ENCODE measurements at regions of chr6 and their contacts with region 1.

Region 1: DNA sequence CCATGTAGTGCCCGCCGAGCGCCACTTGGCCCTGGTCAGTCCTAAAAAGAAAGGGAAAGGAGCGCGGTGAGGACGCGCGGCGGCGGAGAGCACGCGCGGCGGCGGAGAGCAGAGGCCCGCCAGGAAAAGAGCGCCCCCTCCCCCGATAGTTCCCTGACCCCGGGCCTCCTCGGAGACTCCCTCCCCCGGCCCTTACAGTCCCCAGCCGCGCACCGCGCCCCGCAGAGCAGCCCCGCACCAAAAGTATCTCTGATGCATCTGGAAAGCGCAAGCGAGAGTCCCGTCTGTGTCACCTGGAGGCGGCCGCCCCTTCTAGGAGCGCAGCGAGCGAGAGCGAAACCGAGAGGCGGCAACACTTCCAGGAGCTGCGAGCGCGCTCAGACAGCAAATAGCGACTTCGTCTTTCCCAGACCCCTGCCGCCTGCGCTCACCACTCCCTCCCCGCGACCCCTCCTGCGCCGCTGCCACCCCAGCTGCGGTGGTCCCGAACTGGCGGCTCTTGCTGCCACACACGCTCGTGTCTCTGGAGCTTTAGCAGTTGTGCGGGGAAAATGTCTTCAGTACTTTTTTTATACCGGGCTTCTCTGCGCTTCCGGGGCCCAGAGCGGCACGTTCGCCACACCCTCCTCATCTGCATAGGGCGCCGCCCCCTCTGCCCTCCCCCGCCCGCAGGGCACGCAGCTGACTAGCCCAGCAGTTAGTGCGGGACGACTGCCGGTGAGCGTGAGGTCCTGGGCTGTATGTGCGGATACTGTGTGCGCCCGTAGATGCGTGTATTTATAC is at the start of gene TENT5A:
- DNase-seq: peak; percentile 91 to 93
- ATAC-seq: peak; percentile 84 to 93 (median 88)
- H3K4me3 ChIP-seq: peak within 1 kb of the TSS; percentile 73 to 96 (median 82)
- H3K27ac ChIP-seq: peak within 1 kb of the TSS; percentile 87 to 99 (median 96)
- H3K4me1 ChIP-seq: peaks cover 1 to 45% (median 20%) of the 10 kb centered on the region in 9 donors
- H3K27me3 ChIP-seq: no peaks in the 10 kb centered on the region
- CTCF ChIP-seq: peak in 4 of 9 donors; percentile 13 to 33 (median 28)
- total RNA-seq, gene TENT5A: 37.0 to 72.1 (median 46.9) TPM

Region 2: GRCh38 chr6:80338201-80338836 is 1414.0 kb before region 1 on chr6:
- intact Hi-C with region 1: loop called in 1 of 10 experiments (anchors 10 kb)
- DNase-seq: peak; percentile 45 to 72
- ATAC-seq: peak in 6 of 8 donors; percentile 46 to 72 (median 66)
- H3K4me3 ChIP-seq: no peak overlapping the region
- H3K27ac ChIP-seq: no peak overlapping the region
- H3K4me1 ChIP-seq: peaks cover 0 to 6% (median 0%) of the 10 kb centered on the region in 9 donors
- H3K27me3 ChIP-seq: no peaks in the 10 kb centered on the region
- CTCF ChIP-seq: peak; percentile 41 to 83 (median 74)

Region 3: GRCh38 chr6:81451787-81452186 is 300.5 kb before region 1 on chr6:
- intact Hi-C with region 1: loop called in 1 of 10 experiments (anchors 5 kb)
- DNase-seq: no peak
- ATAC-seq: peak in 6 of 8 donors; percentile 59 to 98 (median 88)
- H3K4me3 ChIP-seq: no peak overlapping the region
- H3K27ac ChIP-seq: no peak overlapping the region
- H3K4me1 ChIP-seq: no peaks in the 10 kb centered on the region
- H3K27me3 ChIP-seq: no peaks in the 10 kb centered on the region
- CTCF ChIP-seq: no peak

Region 4: DNA sequence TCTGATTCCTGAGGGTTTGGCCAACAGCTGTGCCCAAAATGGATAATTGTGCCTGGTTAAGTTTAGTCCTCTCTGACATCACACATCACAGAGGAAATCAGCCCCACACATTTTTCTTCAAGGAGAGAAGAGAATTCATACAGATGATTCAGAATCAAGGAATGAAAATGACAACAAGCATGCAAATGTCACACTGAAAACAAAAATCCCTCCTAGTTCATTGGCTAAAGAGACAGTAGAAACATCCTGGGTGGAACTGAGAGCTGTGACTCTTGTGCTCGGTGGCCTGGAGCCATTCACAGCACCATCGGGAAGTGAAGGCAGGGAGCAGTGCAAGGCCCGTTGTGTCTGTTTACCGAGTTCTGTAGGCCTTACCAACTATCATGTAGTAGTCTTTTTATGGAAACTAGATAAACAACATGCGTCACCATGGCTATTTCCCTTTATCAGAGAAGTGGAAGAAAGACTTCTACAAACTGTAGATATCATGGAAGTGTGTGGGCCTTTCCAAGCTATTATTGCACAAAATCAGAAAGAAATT is 81.9 kb after region 1 on chr6:
- intact Hi-C with region 1: loop called in 2 of 10 experiments (anchors 5 kb)
- DNase-seq: peak; percentile 59 to 69
- ATAC-seq: peak; percentile 74 to 100 (median 97)
- H3K4me3 ChIP-seq: no peak overlapping the region
- H3K27ac ChIP-seq: peak overlapping the region; percentile 65 to 82 (median 74)
- H3K4me1 ChIP-seq: peaks cover 0 to 29% (median 10%) of the 10 kb centered on the region in 9 donors
- H3K27me3 ChIP-seq: no peaks in the 10 kb centered on the region
- CTCF ChIP-seq: peak in 3 of 9 donors; percentile 28 to 35 (median 29)

Region 5: DNA sequence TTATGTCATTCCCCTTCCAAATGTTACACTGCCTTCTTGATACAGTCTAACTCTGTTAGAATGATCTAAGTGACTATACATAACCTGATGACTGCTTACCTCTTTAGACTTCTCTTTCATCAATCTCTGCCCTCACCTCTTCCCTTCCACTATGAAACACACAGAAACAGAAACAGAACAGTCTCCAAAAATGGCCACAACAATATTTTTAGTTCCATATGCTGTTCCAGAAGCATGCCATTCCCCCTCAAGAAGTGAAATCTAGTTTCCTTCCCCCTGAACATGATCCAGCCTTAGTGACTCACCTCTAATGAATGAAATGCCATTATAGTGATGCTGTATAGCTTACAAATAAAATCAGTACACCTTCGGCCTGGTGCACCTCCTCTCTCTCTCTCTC is 229.5 kb after region 1 on chr6:
- intact Hi-C with region 1: loop called in 1 of 10 experiments (anchors 10 kb)
- DNase-seq: no peak
- ATAC-seq: peak in 1 of 8 donors; percentile 67
- H3K4me3 ChIP-seq: no peak overlapping the region
- H3K27ac ChIP-seq: no peak overlapping the region
- H3K4me1 ChIP-seq: peaks cover 0 to 8% (median 0%) of the 10 kb centered on the region in 9 donors
- H3K27me3 ChIP-seq: no peaks in the 10 kb centered on the region
- CTCF ChIP-seq: no peak

Region 6: DNA sequence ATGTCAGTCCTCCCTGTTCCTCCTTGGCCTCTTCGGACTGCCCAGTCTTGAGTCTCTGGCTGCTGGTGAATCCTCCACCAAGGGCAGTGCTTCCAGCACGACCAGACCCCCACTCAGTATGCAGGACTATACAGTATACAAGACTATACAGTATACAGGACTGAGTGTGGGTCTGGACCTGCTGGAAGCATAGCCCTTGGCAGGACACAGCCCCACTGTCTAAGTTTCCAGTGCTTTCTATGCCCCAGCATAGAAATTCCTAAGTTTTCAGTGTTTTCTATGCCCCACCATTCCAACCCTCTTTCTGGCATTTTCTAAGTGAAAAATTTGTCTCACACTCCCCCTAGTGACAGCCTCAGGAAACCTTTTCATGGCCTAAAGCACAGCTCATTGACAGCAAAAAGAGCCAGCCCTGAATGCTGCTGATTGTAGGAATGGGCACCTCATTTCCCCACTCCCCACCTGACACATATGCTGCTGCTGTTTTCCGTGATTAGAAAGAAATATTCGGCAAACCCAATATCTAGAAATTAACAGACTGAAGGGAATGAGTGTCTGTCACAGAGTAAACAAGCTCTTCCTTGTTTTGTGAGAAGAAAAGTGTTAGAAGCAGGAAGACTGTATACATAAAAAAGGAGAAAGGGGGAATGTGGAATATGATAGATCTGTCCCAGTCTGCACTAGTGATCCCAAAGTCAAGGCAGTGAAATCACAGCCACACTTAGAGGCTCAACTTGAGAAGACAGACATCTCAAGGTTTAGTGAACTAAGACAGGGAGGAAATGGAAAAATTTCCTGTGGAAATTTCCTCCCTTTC is 288.3 kb after region 1 on chr6:
- intact Hi-C with region 1: loop called in 5 of 10 experiments (anchors 5 to 10 kb)
- DNase-seq: peak in 1 of 2 donors; percentile 50
- ATAC-seq: peak in 7 of 8 donors; percentile 72 to 88 (median 80)
- H3K4me3 ChIP-seq: no peak overlapping the region
- H3K27ac ChIP-seq: peak overlapping the region in 4 of 10 donors; percentile 4 to 22 (median 18)
- H3K4me1 ChIP-seq: peaks cover 0 to 12% (median 5%) of the 10 kb centered on the region in 9 donors
- H3K27me3 ChIP-seq: no peaks in the 10 kb centered on the region
- CTCF ChIP-seq: peak; percentile 46 to 75 (median 71)